H1 (cell line): ENCODE measurements at regions of chr19 and their contacts with region 1.

Region 1: GRCh38 chr19:5680083-5680436 is 256 bp downstream of the MICOS13 start:
- DNase-seq: no peak
- H3K4me3 ChIP-seq: peak overlapping the region; percentile 58 to 83 (median 76)
- H3K27ac ChIP-seq: peak overlapping the region; percentile 69; the same call in 1 of the 2 replicates
- H3K4me1 ChIP-seq: peaks cover 0 to 14% (median 0%) of the 10 kb centered on the region in 4 experiments; a peak in 5 of 7 replicates
- H3K27me3 ChIP-seq: no peaks in the 10 kb centered on the region
- CTCF ChIP-seq: no peak
- EP300 ChIP-seq: no peak
- POLR2A ChIP-seq: no peak
- RAD21 ChIP-seq: no peak

Region 2: DNA sequence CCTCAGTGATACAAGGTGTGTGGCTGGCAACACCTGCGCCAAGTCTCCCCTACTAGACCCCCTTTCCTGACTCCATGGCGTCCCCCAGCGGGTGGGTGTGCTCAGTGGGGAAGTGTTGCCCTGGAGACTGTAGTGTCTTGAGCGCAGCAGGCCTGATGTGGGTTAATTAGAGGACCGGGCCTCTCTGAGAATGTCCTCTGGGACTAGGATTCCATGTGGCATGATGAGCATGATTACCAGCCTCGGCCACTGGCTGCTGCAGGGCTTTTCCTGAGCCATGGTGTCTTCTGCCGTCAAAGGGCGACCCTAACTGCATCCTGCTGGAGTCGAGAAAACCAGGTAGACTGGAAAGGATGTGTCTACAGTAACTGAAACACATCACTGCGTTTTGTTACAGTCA is 27.8 kb before region 1 on chr19:
- CTCF ChIA-PET with region 1: no interaction called
- POLR2A ChIA-PET with region 1: no interaction called
- DNase-seq: no peak
- H3K4me3 ChIP-seq: no peak overlapping the region
- H3K27ac ChIP-seq: no peak overlapping the region
- H3K4me1 ChIP-seq: no peaks in the 10 kb centered on the region
- H3K27me3 ChIP-seq: no peaks in the 10 kb centered on the region
- CTCF ChIP-seq: no peak
- EP300 ChIP-seq: no peak
- POLR2A ChIP-seq: no peak
- RAD21 ChIP-seq: no peak

Region 3: GRCh38 chr19:5665796-5666513 is 14.1 kb before region 1 on chr19:
- CTCF ChIA-PET with region 1: interaction called, 3 read pairs
- POLR2A ChIA-PET with region 1: interaction called, 17 read pairs
- DNase-seq: no peak
- H3K4me3 ChIP-seq: no peak overlapping the region
- H3K27ac ChIP-seq: no peak overlapping the region
- H3K4me1 ChIP-seq: peaks cover 0 to 9% (median 5%) of the 10 kb centered on the region in 4 experiments; a peak in 5 of 7 replicates
- H3K27me3 ChIP-seq: no peaks in the 10 kb centered on the region
- CTCF ChIP-seq: peak in 1 of 3 experiments; percentile 15; a peak in 1 of 4 replicates
- EP300 ChIP-seq: no peak
- POLR2A ChIP-seq: no peak
- RAD21 ChIP-seq: no peak

Region 4: GRCh38 chr19:5805465-5806132 is 125.5 kb after region 1 on chr19:
- CTCF ChIA-PET with region 1: no interaction called
- POLR2A ChIA-PET with region 1: no interaction called
- DNase-seq: peak in 1 of 2 experiments; percentile 94
- H3K4me3 ChIP-seq: peak overlapping the region; percentile 31 to 58 (median 34)
- H3K27ac ChIP-seq: no peak overlapping the region
- H3K4me1 ChIP-seq: peaks cover 0 to 18% (median 10%) of the 10 kb centered on the region in 4 experiments; a peak in 5 of 7 replicates
- H3K27me3 ChIP-seq: peaks cover 2 to 16% (median 8%) of the 10 kb centered on the region in 4 experiments; a peak in 6 of 7 replicates
- CTCF ChIP-seq: peak; percentile 85 to 89 (median 88)
- EP300 ChIP-seq: peak in 1 of 2 experiments; percentile 75; a peak in 1 of 3 replicates
- POLR2A ChIP-seq: no peak
- RAD21 ChIP-seq: peak; percentile 69 to 77